Activated naive CD4-positive, alpha-beta T cell treated with anti-CD3 and anti-CD28 coated beads for 36 hours (primary cell): ENCODE measurements at regions of chr4 and their contacts with region 1.

Region 1: GRCh38 chr4:140153718-140154571 is at the start of gene MAML3:
- DNase-seq: peak; percentile 85
- H3K4me3 Mint-ChIP-seq: peak within 1 kb of the TSS; percentile 82
- H3K27ac Mint-ChIP-seq: peak within 1 kb of the TSS; percentile 5
- H3K4me1 Mint-ChIP-seq: peaks cover 35% of the 10 kb centered on the region
- H3K27me3 Mint-ChIP-seq: peaks cover 13% of the 10 kb centered on the region
- total RNA-seq, gene MAML3: 0.52 to 0.76 TPM

Region 2: GRCh38 chr4:139177868-139178611 is 975.9 kb before region 1 on chr4:
- CTCF ChIA-PET with region 1: no interaction called
- intact Hi-C with region 1: loop called (anchors 5 kb)
- DNase-seq: peak; percentile 95
- H3K4me3 Mint-ChIP-seq: peak overlapping the region; percentile 84
- H3K27ac Mint-ChIP-seq: peak overlapping the region; percentile 63
- H3K4me1 Mint-ChIP-seq: peaks cover 13% of the 10 kb centered on the region
- H3K27me3 Mint-ChIP-seq: peaks cover 5% of the 10 kb centered on the region

Region 3: DNA sequence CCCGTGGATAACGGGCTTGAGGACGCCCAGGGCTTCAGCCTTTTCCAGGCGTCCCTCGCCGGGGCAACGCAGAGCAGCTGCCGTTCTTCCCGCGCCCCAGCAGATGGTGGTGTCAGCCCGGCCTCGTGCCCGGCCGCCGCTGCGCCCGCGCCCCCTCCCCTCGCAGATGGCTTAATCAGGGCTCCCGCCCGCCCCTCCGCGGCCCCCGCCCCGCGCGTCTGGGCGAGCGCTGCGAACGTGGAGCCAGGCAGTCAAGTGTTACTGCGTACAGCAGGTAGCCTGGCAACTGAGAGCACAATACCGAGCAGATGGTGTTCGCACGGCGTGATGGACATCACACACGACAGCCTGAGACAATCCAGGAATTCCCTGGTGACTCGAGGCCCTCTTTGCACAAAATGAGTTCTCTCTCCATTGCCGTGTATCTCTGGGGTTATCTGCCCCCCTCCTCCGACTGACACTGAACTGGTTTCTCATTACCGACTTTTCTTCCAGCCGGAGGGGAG is 419.0 kb before region 1 on chr4:
- CTCF ChIA-PET with region 1: no interaction called
- intact Hi-C with region 1: loop called (anchors 5 kb)
- DNase-seq: peak; percentile 78
- H3K4me3 Mint-ChIP-seq: peak overlapping the region; percentile 61
- H3K27ac Mint-ChIP-seq: no peak overlapping the region
- H3K4me1 Mint-ChIP-seq: peaks cover 22% of the 10 kb centered on the region
- H3K27me3 Mint-ChIP-seq: peaks cover 29% of the 10 kb centered on the region

Region 4: DNA sequence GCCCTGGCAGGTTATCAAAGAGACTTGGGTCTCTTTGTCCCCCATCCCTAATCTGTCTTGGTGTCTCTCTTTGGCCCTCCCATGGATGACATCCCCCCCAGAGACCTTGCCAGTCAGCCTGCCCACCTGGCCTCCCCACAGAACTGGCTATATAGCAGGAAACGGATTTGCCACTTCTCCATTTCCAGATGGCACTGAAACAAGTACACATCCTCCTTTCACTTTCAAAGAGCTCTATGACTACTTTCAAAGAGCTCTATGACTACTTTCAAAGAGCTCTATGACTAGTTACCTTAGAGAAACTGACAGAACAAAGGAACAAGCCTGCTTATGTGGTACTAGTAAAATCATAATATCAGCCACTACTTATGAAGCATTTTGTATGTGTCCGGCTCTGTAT is 175.3 kb before region 1 on chr4:
- CTCF ChIA-PET with region 1: no interaction called
- intact Hi-C with region 1: loop called (anchors 1 kb)
- DNase-seq: peak; percentile 45
- H3K4me3 Mint-ChIP-seq: no peak overlapping the region
- H3K27ac Mint-ChIP-seq: no peak overlapping the region
- H3K4me1 Mint-ChIP-seq: peaks cover 22% of the 10 kb centered on the region
- H3K27me3 Mint-ChIP-seq: no peaks in the 10 kb centered on the region

Region 5: DNA sequence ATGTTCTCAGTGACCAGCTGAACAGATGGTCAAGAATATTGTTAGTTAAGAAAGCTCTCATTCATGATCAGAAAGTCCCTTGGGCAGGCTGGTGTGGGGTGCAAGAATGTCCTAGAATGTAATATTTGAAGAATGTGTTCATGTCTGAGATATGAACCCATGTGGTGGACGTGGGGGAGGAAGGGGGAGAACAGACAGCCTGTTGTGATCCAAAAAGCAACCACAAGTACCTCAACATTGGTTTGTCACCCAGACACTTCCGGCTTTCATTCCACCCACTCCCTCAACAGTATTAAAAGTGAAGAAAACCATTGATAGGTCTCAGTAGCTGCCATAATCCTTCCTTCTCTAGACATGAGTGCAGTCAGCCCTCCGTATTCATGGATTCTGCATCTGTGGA is 82.1 kb before region 1 on chr4:
- CTCF ChIA-PET with region 1: no interaction called
- intact Hi-C with region 1: loop called (anchors 1 kb)
- DNase-seq: peak; percentile 89
- H3K4me3 Mint-ChIP-seq: peak overlapping the region; percentile 46
- H3K27ac Mint-ChIP-seq: peak overlapping the region; percentile 39
- H3K4me1 Mint-ChIP-seq: peaks cover 41% of the 10 kb centered on the region
- H3K27me3 Mint-ChIP-seq: no peaks in the 10 kb centered on the region

Region 6: GRCh38 chr4:140116442-140117104 is 37.4 kb before region 1 on chr4:
- CTCF ChIA-PET with region 1: interaction called, 5 read pairs
- intact Hi-C with region 1: loop called (anchors 1 kb)
- DNase-seq: peak; percentile 66
- H3K4me3 Mint-ChIP-seq: no peak overlapping the region
- H3K27ac Mint-ChIP-seq: peak overlapping the region; percentile 70
- H3K4me1 Mint-ChIP-seq: peaks cover 24% of the 10 kb centered on the region
- H3K27me3 Mint-ChIP-seq: no peaks in the 10 kb centered on the region

Region 7: GRCh38 chr4:140523857-140524742 is 370.2 kb after region 1 on chr4 and contains the start of gene ELMOD2:
- CTCF ChIA-PET with region 1: no interaction called
- intact Hi-C with region 1: loop called (anchors 2 kb)
- DNase-seq: peak; percentile 98
- H3K4me3 Mint-ChIP-seq: peak within 1 kb of the TSS; percentile 85
- H3K27ac Mint-ChIP-seq: peak within 1 kb of the TSS; percentile 35
- H3K4me1 Mint-ChIP-seq: peaks cover 11% of the 10 kb centered on the region
- H3K27me3 Mint-ChIP-seq: no peaks in the 10 kb centered on the region
- total RNA-seq, gene ELMOD2: 14.4 to 14.8 TPM